ENCODE measurements at regions of chr22 and their contacts with region 1.

Region 1: GRCh38 chr22:31080848-31081649 is at the start of gene SMTN:
- DNase-seq: peak; percentile 56 to 84 (median 68)
- H3K4me3 ChIP-seq: peak within 1 kb of the TSS; percentile 34 to 87 (median 59)
- H3K27ac ChIP-seq: peak within 1 kb of the TSS in 43 of 59 donors; percentile 1 to 99 (median 47)
- H3K27me3 ChIP-seq: peaks cover 0 to 5% (median 0%) of the 10 kb centered on the region in 45 donors
- CTCF ChIP-seq: no peak
- total RNA-seq, gene SMTN: 12.5 to 186 (median 28.4) TPM

Region 2: DNA sequence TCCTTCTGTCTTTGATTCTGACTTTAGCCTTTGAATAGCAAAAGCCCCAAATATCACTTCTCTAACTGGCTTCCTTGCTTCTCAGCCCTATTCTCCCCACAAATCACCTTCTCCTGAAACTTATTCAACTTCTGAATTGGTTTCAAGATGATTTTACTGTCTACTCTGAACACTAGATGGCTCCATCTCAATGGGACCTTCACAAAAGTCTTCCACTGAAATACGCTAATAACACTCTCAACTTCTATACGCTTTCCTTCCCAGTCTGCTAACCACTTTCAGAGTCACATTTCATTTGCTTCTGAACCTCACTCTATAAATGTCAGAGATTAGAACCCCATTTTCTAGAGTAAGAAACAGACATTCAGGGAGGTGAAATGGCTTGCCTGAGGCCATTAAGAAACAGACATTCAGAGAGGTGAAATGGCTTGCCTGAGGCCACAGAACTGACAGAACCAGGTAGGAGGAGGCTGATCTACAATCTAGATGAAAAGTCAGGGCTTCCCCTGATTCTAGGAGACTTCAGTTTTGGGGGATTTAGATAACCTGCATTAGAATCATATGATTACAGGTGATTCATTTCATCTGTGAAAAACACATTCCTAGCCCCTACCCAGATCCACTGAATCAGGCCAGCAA is 133.1 kb before region 1 on chr22:
- intact Hi-C with region 1: loop called (anchors 1 to 2 kb)
- DNase-seq: no peak
- H3K4me3 ChIP-seq: peak overlapping the region in 3 of 59 donors; percentile 2 to 6 (median 6)
- H3K27ac ChIP-seq: peak overlapping the region in 54 of 59 donors; percentile 0 to 87 (median 68)
- H3K27me3 ChIP-seq: no peaks in the 10 kb centered on the region
- CTCF ChIP-seq: peak; percentile 48 to 83 (median 66)

Region 3: DNA sequence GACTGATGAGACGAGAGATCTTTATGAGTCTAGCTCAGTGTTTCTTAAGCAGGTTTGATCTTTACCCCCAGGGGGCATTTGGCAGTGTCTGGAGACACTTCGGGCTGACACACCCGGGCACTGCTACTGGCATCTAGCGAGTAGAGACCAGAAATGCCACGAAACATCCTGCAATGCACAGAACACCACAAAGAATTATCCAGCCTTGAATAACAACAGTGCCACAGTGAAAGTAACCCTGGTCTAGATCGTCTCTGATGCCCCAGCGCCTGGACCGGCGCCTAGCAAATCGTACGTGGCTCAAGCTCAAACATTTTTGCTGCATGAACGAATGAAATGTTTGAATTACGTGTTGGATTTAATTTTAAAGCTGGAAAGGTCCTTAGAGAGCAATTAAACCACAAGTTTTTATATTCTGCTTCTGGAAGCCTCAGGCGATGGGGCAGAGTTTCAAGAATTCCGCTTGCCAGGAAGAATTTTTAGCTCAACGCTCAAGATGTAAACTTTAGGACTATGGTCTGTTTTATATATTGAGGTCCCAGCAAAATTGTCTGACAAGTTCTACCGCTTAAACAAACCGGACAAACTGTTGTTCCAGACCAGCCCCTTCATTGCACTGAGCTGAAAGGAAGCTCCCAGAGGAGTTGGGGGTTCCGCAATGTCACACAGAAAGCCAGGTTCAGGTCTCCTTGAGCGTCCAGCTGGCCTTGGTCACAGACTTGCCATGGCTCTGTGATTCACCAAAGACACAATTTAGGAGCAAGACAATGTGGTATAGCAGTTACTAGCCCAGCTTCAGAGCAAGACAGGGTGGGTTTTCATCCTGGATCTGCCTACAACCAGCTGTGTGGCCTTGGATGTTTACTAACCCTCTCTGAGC is 44.1 kb before region 1 on chr22:
- intact Hi-C with region 1: no loop called
- DNase-seq: no peak
- H3K4me3 ChIP-seq: peak overlapping the region in 16 of 59 donors; percentile 0 to 43 (median 11)
- H3K27ac ChIP-seq: no peak overlapping the region
- H3K27me3 ChIP-seq: peaks cover 0 to 8% (median 0%) of the 10 kb centered on the region in 45 donors
- CTCF ChIP-seq: no peak

Region 4: DNA sequence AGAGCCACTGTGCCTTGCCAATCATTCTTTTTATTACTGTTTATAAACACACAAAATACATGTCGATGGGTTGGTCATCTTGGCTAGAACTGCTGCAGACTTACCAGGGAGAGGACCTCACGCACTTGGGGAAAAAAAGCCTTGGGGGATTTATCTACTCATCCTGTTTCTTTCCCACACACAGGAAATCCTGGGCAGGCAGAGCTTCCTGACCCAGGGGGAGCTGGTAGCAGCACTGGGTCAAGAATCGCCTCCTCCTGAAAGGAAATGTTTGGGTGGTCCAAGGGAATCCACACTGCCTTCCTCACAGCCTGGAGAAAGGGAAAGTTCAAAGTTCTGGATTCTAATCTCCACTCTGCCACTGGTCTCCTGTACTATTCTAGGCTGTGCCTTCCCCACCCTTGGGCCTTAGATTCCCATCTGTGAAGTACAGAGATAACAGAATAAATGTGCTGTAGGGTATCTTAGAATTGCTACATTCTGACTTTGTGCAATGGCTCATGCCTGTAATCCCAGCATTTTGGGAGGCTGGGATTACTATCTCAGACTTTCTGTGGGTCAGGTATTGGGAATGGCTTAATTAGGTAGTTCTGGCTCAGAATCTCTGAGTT is 31.1 kb before region 1 on chr22:
- intact Hi-C with region 1: no loop called
- DNase-seq: no peak
- H3K4me3 ChIP-seq: no peak overlapping the region
- H3K27ac ChIP-seq: no peak overlapping the region
- H3K27me3 ChIP-seq: no peaks in the 10 kb centered on the region
- CTCF ChIP-seq: no peak

Region 5: DNA sequence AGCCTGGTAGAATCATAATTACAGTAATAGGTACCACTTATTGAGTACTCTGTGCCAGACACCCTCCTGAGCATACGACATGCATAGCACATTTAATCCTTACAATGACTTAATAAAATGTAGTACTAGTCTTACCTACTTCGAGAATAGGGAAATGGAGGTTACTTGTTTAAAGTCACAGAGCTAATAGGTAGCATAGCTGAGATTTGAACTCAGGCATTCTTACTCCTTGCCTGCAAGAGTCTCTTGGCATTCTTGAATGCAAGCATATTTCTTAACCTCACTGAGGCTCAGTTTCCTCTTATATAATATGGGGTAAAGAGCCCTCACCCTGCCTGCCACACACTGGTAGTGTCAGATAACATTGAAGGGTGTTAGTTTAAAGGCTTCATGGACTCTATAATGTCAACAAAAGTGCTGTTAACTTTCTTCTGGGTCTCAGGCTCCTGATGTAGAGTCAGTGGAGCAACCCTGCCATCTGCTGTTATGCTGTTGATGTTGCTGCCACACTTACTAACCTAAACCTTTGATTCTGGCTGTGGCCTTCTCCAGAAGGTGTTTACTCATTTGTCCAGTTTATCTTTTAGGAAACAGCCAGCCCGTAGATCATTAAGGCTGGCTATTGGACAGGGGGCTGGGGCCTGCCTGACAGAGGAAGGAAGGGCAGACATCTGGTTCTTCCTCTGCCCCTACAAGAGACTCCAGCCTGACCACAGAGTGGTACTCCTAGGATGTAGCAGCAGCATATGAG is 150.0 kb after region 1 on chr22:
- intact Hi-C with region 1: loop called in 1 of 2 experiments (anchors 10 kb)
- DNase-seq: peak in 5 of 10 donors; percentile 20 to 60 (median 47)
- H3K4me3 ChIP-seq: peak overlapping the region in 1 of 59 donors; percentile 13
- H3K27ac ChIP-seq: peak overlapping the region in 44 of 59 donors; percentile 4 to 87 (median 59)
- H3K27me3 ChIP-seq: no peaks in the 10 kb centered on the region
- CTCF ChIP-seq: peak in 55 of 56 donors; percentile 32 to 81 (median 66)